ENCODE measurements at regions of chr16 and their contacts with region 1.

Region 1: GRCh38 chr16:16006650-16007049 is 57.2 kb downstream of the ABCC1 start:
- DNase-seq: no peak
- H3K4me3 Mint-ChIP-seq: no peak overlapping the region
- H3K27ac Mint-ChIP-seq: no peak overlapping the region
- H3K4me1 Mint-ChIP-seq: peaks cover 21% of the 10 kb centered on the region
- H3K27me3 Mint-ChIP-seq: no peaks in the 10 kb centered on the region

Region 2: DNA sequence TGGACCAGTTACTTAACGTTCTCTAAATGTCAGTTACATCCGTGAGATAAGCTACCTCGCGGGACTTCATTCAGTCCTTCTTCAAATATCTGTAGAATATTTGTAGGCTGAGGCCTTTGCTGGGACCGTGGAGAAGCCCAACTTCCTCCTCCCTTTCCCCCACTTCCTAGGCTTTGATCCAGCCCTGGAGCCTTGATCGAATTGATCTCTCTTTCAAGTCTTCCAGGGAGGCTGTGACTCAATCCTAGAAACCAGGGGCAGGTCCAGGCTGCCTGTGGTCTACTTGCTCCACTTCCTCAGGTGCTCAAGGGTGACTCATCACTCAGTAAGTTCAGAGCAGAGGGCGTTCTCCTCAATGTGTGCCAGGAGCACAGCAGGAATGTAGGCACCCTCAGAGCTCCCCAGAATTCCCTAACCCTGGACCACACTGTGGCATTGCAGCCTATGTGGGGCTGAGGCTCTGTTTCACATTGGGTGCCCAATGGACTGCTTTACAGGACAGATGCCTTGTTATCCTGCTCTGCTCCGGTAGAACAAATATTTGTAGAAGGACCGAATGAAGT is 107.0 kb before region 1 on chr16:
- CTCF ChIA-PET with region 1: no interaction called
- POLR2A ChIA-PET with region 1: no interaction called
- DNase-seq: peak; percentile 41
- H3K4me3 Mint-ChIP-seq: no peak overlapping the region
- H3K27ac Mint-ChIP-seq: no peak overlapping the region
- H3K4me1 Mint-ChIP-seq: peaks cover 25% of the 10 kb centered on the region
- H3K27me3 Mint-ChIP-seq: no peaks in the 10 kb centered on the region

Region 3: DNA sequence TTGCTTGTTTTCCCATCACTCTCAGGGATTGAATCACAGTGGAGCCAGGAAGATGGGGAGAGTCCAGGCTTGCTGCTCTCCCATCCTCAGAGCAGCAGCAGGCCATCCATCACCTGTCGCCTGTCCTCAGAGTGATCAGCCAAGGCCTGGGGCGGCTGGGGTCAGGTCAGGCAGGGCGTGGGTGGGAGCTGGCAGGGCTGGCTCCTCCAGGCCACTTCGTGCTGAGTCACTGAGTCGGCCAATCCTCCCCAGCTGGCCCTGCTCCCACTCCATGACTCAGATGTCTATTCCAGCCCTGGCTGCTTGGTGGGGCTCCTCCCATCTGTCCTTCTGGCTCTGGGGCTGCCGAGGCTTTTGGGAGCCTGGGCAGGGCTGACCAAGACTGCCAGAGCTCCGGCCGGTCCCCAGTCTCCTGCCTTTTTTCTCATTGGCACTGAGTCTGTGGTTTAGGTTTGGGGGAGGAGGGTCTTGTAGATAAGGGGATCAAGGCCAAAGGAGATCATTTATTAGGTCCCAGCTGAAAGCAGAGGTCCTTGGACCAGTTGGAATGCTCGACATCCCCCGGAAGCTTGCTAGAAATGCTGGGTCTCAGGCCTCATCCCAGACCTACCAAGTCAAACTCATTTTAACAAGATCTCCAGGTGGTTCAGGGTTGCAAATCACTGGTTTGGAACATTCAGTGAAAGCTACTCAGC is 15.5 kb after region 1 on chr16:
- CTCF ChIA-PET with region 1: no interaction called
- POLR2A ChIA-PET with region 1: no interaction called
- DNase-seq: no peak
- H3K4me3 Mint-ChIP-seq: no peak overlapping the region
- H3K27ac Mint-ChIP-seq: no peak overlapping the region
- H3K4me1 Mint-ChIP-seq: peaks cover 32% of the 10 kb centered on the region
- H3K27me3 Mint-ChIP-seq: no peaks in the 10 kb centered on the region

Region 4: GRCh38 chr16:17328932-17329331 is 1322.3 kb after region 1 on chr16:
- CTCF ChIA-PET with region 1: no interaction called
- POLR2A ChIA-PET with region 1: interaction called, 15 read pairs
- DNase-seq: no peak
- H3K4me3 Mint-ChIP-seq: no peak overlapping the region
- H3K27ac Mint-ChIP-seq: peak overlapping the region; percentile 4
- H3K4me1 Mint-ChIP-seq: peaks cover 20% of the 10 kb centered on the region
- H3K27me3 Mint-ChIP-seq: no peaks in the 10 kb centered on the region

Measured in activated CD4-positive, alpha-beta T cell treated with anti-CD3 and anti-CD28 coated beads, Interleukin-2, amount 10 ng/mL, durations not matched to agents 7 days and 5 days (primary cell).